Breast epithelium (tissue), 4 donors: ENCODE measurements at regions of chr16 and their contacts with region 1.

Region 1: GRCh38 chr16:29694384-29695195 is 15.6 kb downstream of the QPRT start:
- DNase-seq: no peak
- H3K4me3 ChIP-seq: no peak overlapping the region
- H3K27ac ChIP-seq: no peak overlapping the region
- H3K4me1 ChIP-seq: no peaks in the 10 kb centered on the region
- H3K27me3 ChIP-seq: no peaks in the 10 kb centered on the region
- CTCF ChIP-seq: no peak
- POLR2A ChIP-seq: no peak

Region 2: GRCh38 chr16:28513484-28514181 is 1181.0 kb before region 1 on chr16:
- intact Hi-C with region 1: no loop called
- DNase-seq: no peak
- H3K4me3 ChIP-seq: no peak overlapping the region
- H3K27ac ChIP-seq: no peak overlapping the region
- H3K4me1 ChIP-seq: no peaks in the 10 kb centered on the region
- H3K27me3 ChIP-seq: no peaks in the 10 kb centered on the region
- CTCF ChIP-seq: no peak
- POLR2A ChIP-seq: no peak

Region 3: GRCh38 chr16:30010844-30011713 is 316.5 kb after region 1 on chr16 and contains the start of gene DOC2A:
- intact Hi-C with region 1: loop called (anchors 10 kb)
- DNase-seq: no peak
- H3K4me3 ChIP-seq: peak within 1 kb of the TSS; percentile 22 to 73 (median 52)
- H3K27ac ChIP-seq: no peak within 1 kb of the TSS
- H3K4me1 ChIP-seq: peaks cover 9 to 13% of the 10 kb centered on the region in 2 donors
- H3K27me3 ChIP-seq: peaks cover 10 to 25% of the 10 kb centered on the region in 2 donors
- CTCF ChIP-seq: no peak
- POLR2A ChIP-seq: no peak
- total RNA-seq, gene DOC2A: 0.48 to 4.5 (median 2.3) TPM